IMR-90 (cell line): ENCODE measurements at regions of chr4 and their contacts with region 1.

Region 1: GRCh38 chr4:99949034-99949998 is 759 bp downstream of the H2AZ1 start:
- DNase-seq: peak; percentile 93
- ATAC-seq: peak; percentile 8
- H3K4me3 ChIP-seq: peak overlapping the region; percentile 70
- H3K27ac ChIP-seq: peak overlapping the region; percentile 93
- H3K4me1 ChIP-seq: peaks cover 4% of the 10 kb centered on the region; the same call in 1 of the 2 replicates
- H3K27me3 ChIP-seq: no peaks in the 10 kb centered on the region
- CTCF ChIP-seq: peak; percentile 91
- POLR2A ChIP-seq: no peak
- RAD21 ChIP-seq: peak; percentile 71

Region 2: GRCh38 chr4:99755223-99755944 is 193.9 kb before region 1 on chr4:
- CTCF ChIA-PET with region 1: interaction called, 3 read pairs
- POLR2A ChIA-PET with region 1: no interaction called
- dilution Hi-C with region 1: no loop called
- in situ Hi-C with region 1: no loop called
- intact Hi-C with region 1: loop called (anchors 5 kb)
- DNase-seq: peak; percentile 20
- ATAC-seq: peak; percentile 57
- H3K4me3 ChIP-seq: no peak overlapping the region
- H3K27ac ChIP-seq: no peak overlapping the region
- H3K4me1 ChIP-seq: peaks cover 7% of the 10 kb centered on the region; the same call in 1 of the 2 replicates
- H3K27me3 ChIP-seq: no peaks in the 10 kb centered on the region
- CTCF ChIP-seq: no peak
- POLR2A ChIP-seq: no peak
- RAD21 ChIP-seq: no peak

Region 3: DNA sequence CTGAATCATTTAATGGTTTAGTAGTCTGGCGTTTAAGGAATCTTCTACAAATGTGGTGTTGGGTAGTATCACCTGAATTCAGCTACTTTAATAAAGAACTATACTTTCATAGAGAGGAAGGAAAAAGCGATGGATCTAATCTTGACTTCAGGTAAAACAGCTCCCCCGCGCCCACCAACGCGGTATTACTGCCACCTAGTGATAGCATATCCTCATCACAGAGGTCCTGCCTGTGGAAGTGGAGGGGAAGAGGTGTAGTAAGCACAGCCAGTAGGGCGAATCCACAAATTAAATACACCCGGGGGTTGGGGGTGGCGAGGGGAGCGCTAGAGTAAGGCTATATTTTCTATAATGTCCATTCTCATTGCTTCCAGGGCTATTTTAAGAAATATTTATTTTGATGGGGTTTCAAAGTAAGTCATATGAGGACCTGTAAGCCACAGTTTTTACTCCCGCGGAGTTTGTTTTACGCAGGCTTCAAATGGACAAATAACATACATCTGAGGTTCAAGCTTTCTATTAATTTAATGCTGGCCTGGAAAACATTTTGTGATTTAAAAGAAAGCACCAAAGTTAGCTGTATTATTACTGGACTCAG is 141.0 kb before region 1 on chr4:
- CTCF ChIA-PET with region 1: no interaction called
- POLR2A ChIA-PET with region 1: no interaction called
- dilution Hi-C with region 1: no loop called
- in situ Hi-C with region 1: no loop called
- intact Hi-C with region 1: loop called (anchors 5 kb)
- DNase-seq: peak; percentile 21
- ATAC-seq: peak; percentile 63
- H3K4me3 ChIP-seq: no peak overlapping the region
- H3K27ac ChIP-seq: no peak overlapping the region
- H3K4me1 ChIP-seq: no peaks in the 10 kb centered on the region
- H3K27me3 ChIP-seq: peaks cover 3% of the 10 kb centered on the region; the same call in 1 of the 2 replicates
- CTCF ChIP-seq: peak; percentile 59
- POLR2A ChIP-seq: no peak
- RAD21 ChIP-seq: peak; percentile 65

Region 4: GRCh38 chr4:99832336-99832735 is 117.0 kb before region 1 on chr4:
- CTCF ChIA-PET with region 1: no interaction called
- POLR2A ChIA-PET with region 1: no interaction called
- dilution Hi-C with region 1: no loop called
- in situ Hi-C with region 1: no loop called
- intact Hi-C with region 1: loop called (anchors 5 kb)
- DNase-seq: no peak
- ATAC-seq: peak; percentile 68
- H3K4me3 ChIP-seq: no peak overlapping the region
- H3K27ac ChIP-seq: no peak overlapping the region
- H3K4me1 ChIP-seq: no peaks in the 10 kb centered on the region
- H3K27me3 ChIP-seq: 0 out of 2 replicates have a peak, but pooled peaks cover 2% of the 10 kb centered on the region
- CTCF ChIP-seq: no peak
- POLR2A ChIP-seq: no peak
- RAD21 ChIP-seq: no peak

Region 5: GRCh38 chr4:99894161-99894997 is 54.9 kb before region 1 on chr4 and contains the start of gene LAMTOR3:
- CTCF ChIA-PET with region 1: interaction called, 4 read pairs
- POLR2A ChIA-PET with region 1: interaction called, 3 read pairs
- dilution Hi-C with region 1: no loop called
- in situ Hi-C with region 1: no loop called
- intact Hi-C with region 1: loop called (anchors 2 kb)
- DNase-seq: peak; percentile 88
- ATAC-seq: peak; percentile 98
- H3K4me3 ChIP-seq: peak within 1 kb of the TSS; percentile 99
- H3K27ac ChIP-seq: peak within 1 kb of the TSS; percentile 96
- H3K4me1 ChIP-seq: peaks cover 4% of the 10 kb centered on the region
- H3K27me3 ChIP-seq: no peaks in the 10 kb centered on the region
- CTCF ChIP-seq: no peak
- POLR2A ChIP-seq: peak; percentile 69
- RAD21 ChIP-seq: no peak
- total RNA-seq, gene LAMTOR3: 35.7 and 56.1 TPM in 2 replicates

Region 6: GRCh38 chr4:100034023-100034664 is 84.8 kb after region 1 on chr4:
- CTCF ChIA-PET with region 1: no interaction called
- POLR2A ChIA-PET with region 1: no interaction called
- dilution Hi-C with region 1: no loop called
- in situ Hi-C with region 1: no loop called
- intact Hi-C with region 1: no loop called
- DNase-seq: peak; percentile 24
- ATAC-seq: peak; percentile 89
- H3K4me3 ChIP-seq: no peak overlapping the region
- H3K27ac ChIP-seq: no peak overlapping the region
- H3K4me1 ChIP-seq: peaks cover 3% of the 10 kb centered on the region; the same call in 1 of the 2 replicates
- H3K27me3 ChIP-seq: no peaks in the 10 kb centered on the region; the same call in 1 of the 2 replicates
- CTCF ChIP-seq: no peak
- POLR2A ChIP-seq: no peak
- RAD21 ChIP-seq: no peak

Region 7: GRCh38 chr4:100060765-100061416 is 111.6 kb after region 1 on chr4:
- CTCF ChIA-PET with region 1: no interaction called
- POLR2A ChIA-PET with region 1: no interaction called
- dilution Hi-C with region 1: no loop called
- in situ Hi-C with region 1: no loop called
- intact Hi-C with region 1: loop called (anchors 2 kb)
- DNase-seq: no peak
- ATAC-seq: no peak
- H3K4me3 ChIP-seq: no peak overlapping the region
- H3K27ac ChIP-seq: no peak overlapping the region
- H3K4me1 ChIP-seq: peaks cover 5% of the 10 kb centered on the region
- H3K27me3 ChIP-seq: no peaks in the 10 kb centered on the region
- CTCF ChIP-seq: no peak
- POLR2A ChIP-seq: no peak
- RAD21 ChIP-seq: no peak